CD4-positive, alpha-beta T cell (primary cell): ENCODE measurements at regions of chr17 and their contacts with region 1.

Region 1: GRCh38 chr17:73835605-73836004 is 191.4 kb upstream of the SDK2 start:
- DNase-seq: no peak
- ATAC-seq: peak; percentile 86
- H3K4me3 ChIP-seq: no peak overlapping the region
- H3K4me3 Mint-ChIP-seq: peak overlapping the region; percentile 36
- H3K27ac ChIP-seq: no peak overlapping the region
- H3K27ac Mint-ChIP-seq: peak overlapping the region; percentile 79
- H3K4me1 ChIP-seq: peaks cover 29% of the 10 kb centered on the region
- H3K4me1 Mint-ChIP-seq: peaks cover 59% of the 10 kb centered on the region
- H3K27me3 ChIP-seq: no peaks in the 10 kb centered on the region
- H3K27me3 Mint-ChIP-seq: no peaks in the 10 kb centered on the region
- CTCF ChIP-seq: no peak

Region 2: DNA sequence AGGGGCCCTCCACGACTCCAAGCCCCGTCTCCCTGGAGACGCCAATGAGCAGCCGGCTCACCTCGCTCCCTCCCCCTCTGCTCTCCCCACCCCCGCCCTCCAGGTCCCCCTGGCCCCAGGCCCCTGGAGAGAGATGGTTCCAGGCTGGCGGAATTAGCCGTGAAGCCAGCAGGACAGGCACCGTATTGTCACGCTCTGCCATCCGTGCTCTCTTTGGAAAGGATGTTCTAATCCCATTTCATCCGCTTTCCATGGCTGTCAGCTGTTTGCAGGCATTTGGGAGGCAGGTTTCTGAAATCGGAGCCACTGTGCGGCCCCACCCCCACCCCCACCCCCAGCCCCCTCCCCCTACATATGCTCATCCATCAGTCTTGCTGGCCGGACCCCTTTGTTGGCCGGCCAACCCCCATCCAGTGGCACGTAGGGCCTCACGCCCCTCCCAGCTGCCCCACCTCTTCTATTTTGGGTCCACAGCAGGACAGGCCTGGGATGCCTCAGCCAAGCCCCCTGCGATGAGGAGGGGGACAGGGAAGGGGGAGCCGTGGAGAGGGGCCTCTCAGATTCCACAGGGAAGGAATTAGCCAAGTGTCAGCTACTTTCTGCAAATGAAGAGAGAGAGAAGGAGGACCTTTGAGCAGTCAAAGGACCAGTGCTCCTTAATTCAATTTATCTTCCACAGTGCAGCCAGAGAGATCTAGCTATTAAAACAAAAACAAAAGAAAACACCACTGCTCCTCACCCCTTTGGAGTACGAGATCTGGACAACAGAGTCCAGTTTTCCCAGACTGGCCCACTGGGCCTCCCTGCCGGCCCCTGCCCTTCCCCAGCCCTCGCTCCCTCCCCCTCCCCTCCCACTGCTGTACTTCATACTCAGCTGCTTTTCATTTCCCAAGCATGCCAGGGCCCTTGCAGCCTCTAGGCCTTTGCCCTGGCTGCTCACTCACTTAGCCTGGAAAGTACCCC is 222.1 kb before region 1 on chr17:
- CTCF ChIA-PET with region 1: no interaction called
- POLR2A ChIA-PET with region 1: no interaction called
- intact Hi-C with region 1: no loop called
- DNase-seq: no peak
- ATAC-seq: no peak
- H3K4me3 ChIP-seq: no peak overlapping the region
- H3K4me3 Mint-ChIP-seq: no peak overlapping the region
- H3K27ac ChIP-seq: no peak overlapping the region
- H3K27ac Mint-ChIP-seq: no peak overlapping the region
- H3K4me1 ChIP-seq: no peaks in the 10 kb centered on the region
- H3K4me1 Mint-ChIP-seq: peaks cover 13% of the 10 kb centered on the region
- H3K27me3 ChIP-seq: no peaks in the 10 kb centered on the region
- H3K27me3 Mint-ChIP-seq: no peaks in the 10 kb centered on the region
- CTCF ChIP-seq: no peak

Region 3: DNA sequence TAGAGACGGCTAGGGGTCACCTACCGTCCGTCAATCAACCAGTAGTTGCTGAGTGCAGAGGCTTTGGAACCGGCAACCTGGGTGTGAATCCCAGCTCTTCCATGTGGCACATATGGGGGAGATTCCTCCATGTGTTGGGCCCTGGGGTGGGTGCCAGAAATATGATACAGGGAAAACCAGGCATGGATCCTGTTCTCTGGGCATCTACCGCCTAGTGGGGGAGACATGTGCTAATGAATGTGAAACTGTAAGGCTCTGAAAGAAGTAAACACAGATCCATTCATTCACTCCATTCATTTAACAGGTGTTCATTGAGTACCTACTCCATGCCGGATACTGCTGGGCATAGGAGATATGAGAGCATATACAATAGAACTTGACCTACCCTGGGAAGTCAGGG is 151.8 kb before region 1 on chr17:
- CTCF ChIA-PET with region 1: no interaction called
- POLR2A ChIA-PET with region 1: no interaction called
- intact Hi-C with region 1: no loop called
- DNase-seq: no peak
- ATAC-seq: no peak
- H3K4me3 ChIP-seq: no peak overlapping the region
- H3K4me3 Mint-ChIP-seq: no peak overlapping the region
- H3K27ac ChIP-seq: no peak overlapping the region
- H3K27ac Mint-ChIP-seq: no peak overlapping the region
- H3K4me1 ChIP-seq: no peaks in the 10 kb centered on the region
- H3K4me1 Mint-ChIP-seq: no peaks in the 10 kb centered on the region
- H3K27me3 ChIP-seq: no peaks in the 10 kb centered on the region
- H3K27me3 Mint-ChIP-seq: no peaks in the 10 kb centered on the region
- CTCF ChIP-seq: no peak

Region 4: GRCh38 chr17:73773702-73774101 is 61.9 kb before region 1 on chr17:
- CTCF ChIA-PET with region 1: no interaction called
- POLR2A ChIA-PET with region 1: no interaction called
- intact Hi-C with region 1: no loop called
- DNase-seq: peak in 1 of 14 experiments; percentile 17
- ATAC-seq: no peak
- H3K4me3 ChIP-seq: no peak overlapping the region
- H3K4me3 Mint-ChIP-seq: no peak overlapping the region
- H3K27ac ChIP-seq: no peak overlapping the region
- H3K27ac Mint-ChIP-seq: no peak overlapping the region
- H3K4me1 ChIP-seq: no peaks in the 10 kb centered on the region
- H3K4me1 Mint-ChIP-seq: no peaks in the 10 kb centered on the region
- H3K27me3 ChIP-seq: no peaks in the 10 kb centered on the region
- H3K27me3 Mint-ChIP-seq: no peaks in the 10 kb centered on the region
- CTCF ChIP-seq: no peak

Region 5: GRCh38 chr17:73820686-73821448 is 14.7 kb before region 1 on chr17:
- CTCF ChIA-PET with region 1: no interaction called
- POLR2A ChIA-PET with region 1: interaction called, 3 read pairs
- intact Hi-C with region 1: loop called in 1 of 2 experiments (anchors 2 kb)
- DNase-seq: no peak
- ATAC-seq: no peak
- H3K4me3 ChIP-seq: no peak overlapping the region
- H3K4me3 Mint-ChIP-seq: no peak overlapping the region
- H3K27ac ChIP-seq: no peak overlapping the region
- H3K27ac Mint-ChIP-seq: no peak overlapping the region
- H3K4me1 ChIP-seq: peaks cover 32% of the 10 kb centered on the region
- H3K4me1 Mint-ChIP-seq: peaks cover 47% of the 10 kb centered on the region
- H3K27me3 ChIP-seq: no peaks in the 10 kb centered on the region
- H3K27me3 Mint-ChIP-seq: no peaks in the 10 kb centered on the region
- CTCF ChIP-seq: no peak

Region 6: DNA sequence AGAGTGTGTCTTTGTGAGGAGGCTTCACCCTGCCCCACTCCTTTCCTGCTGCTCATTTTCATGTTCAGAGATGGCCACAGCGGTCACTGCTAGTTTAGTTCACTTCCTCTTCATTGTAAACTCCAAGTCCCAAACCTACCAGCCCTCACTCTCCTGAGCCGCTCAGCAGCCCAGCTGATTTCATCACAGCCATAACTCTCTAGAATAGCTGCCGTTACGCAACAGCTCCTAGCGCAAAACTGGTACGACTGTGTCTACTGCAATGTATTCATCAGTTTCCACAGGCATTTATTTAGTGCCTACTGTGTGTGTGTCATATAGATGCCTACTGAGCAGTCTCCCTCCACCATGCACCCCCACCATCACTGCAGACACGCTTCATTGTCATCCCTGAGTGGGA is 134.4 kb after region 1 on chr17:
- CTCF ChIA-PET with region 1: no interaction called
- POLR2A ChIA-PET with region 1: no interaction called
- intact Hi-C with region 1: no loop called
- DNase-seq: peak in 3 of 14 experiments; percentile 12 to 56 (median 43)
- ATAC-seq: no peak
- H3K4me3 ChIP-seq: no peak overlapping the region
- H3K4me3 Mint-ChIP-seq: no peak overlapping the region
- H3K27ac ChIP-seq: no peak overlapping the region
- H3K27ac Mint-ChIP-seq: no peak overlapping the region
- H3K4me1 ChIP-seq: no peaks in the 10 kb centered on the region
- H3K4me1 Mint-ChIP-seq: no peaks in the 10 kb centered on the region
- H3K27me3 ChIP-seq: peaks cover 0 to 7% of the 10 kb centered on the region in 2 experiments
- H3K27me3 Mint-ChIP-seq: peaks cover 32% of the 10 kb centered on the region
- CTCF ChIP-seq: no peak